H1 (cell line): ENCODE measurements at regions of chr2 and their contacts with region 1.

Region 1: GRCh38 chr2:228039752-228040534 is 141.5 kb downstream of the SPHKAP start:
- DNase-seq: no peak
- H3K4me3 ChIP-seq: no peak overlapping the region
- H3K27ac ChIP-seq: no peak overlapping the region
- H3K4me1 ChIP-seq: no peaks in the 10 kb centered on the region
- H3K27me3 ChIP-seq: no peaks in the 10 kb centered on the region
- CTCF ChIP-seq: peak; percentile 7 to 68 (median 58)
- EP300 ChIP-seq: no peak
- POLR2A ChIP-seq: no peak
- RAD21 ChIP-seq: peak; percentile 50 to 54

Region 2: GRCh38 chr2:227990937-227991336 is 49.0 kb before region 1 on chr2:
- CTCF ChIA-PET with region 1: interaction called, 13 read pairs
- POLR2A ChIA-PET with region 1: no interaction called
- DNase-seq: no peak
- H3K4me3 ChIP-seq: no peak overlapping the region
- H3K27ac ChIP-seq: no peak overlapping the region
- H3K4me1 ChIP-seq: no peaks in the 10 kb centered on the region
- H3K27me3 ChIP-seq: no peaks in the 10 kb centered on the region
- CTCF ChIP-seq: no peak
- EP300 ChIP-seq: no peak
- POLR2A ChIP-seq: no peak
- RAD21 ChIP-seq: no peak

Region 3: GRCh38 chr2:228023619-228024018 is 16.3 kb before region 1 on chr2:
- CTCF ChIA-PET with region 1: interaction called, 15 read pairs
- POLR2A ChIA-PET with region 1: interaction called, 3 read pairs
- DNase-seq: no peak
- H3K4me3 ChIP-seq: no peak overlapping the region
- H3K27ac ChIP-seq: no peak overlapping the region
- H3K4me1 ChIP-seq: no peaks in the 10 kb centered on the region
- H3K27me3 ChIP-seq: no peaks in the 10 kb centered on the region
- CTCF ChIP-seq: no peak
- EP300 ChIP-seq: no peak
- POLR2A ChIP-seq: no peak
- RAD21 ChIP-seq: no peak